Cardiac septum (tissue), 1 donor: ENCODE measurements at regions of chr2 and their contacts with region 1.

Region 1: GRCh38 chr2:168626096-168626495 is 170.0 kb downstream of the CERS6 start:
- DNase-seq: no peak

Region 2: GRCh38 chr2:168530982-168531622 is 95.0 kb before region 1 on chr2:
- intact Hi-C with region 1: no loop called
- DNase-seq: no peak

Region 3: GRCh38 chr2:168560817-168561499 is 65.1 kb before region 1 on chr2:
- intact Hi-C with region 1: loop called (anchors 5 kb)
- DNase-seq: no peak